ENCODE measurements at regions of chr10 and their contacts with region 1.

Region 1: DNA sequence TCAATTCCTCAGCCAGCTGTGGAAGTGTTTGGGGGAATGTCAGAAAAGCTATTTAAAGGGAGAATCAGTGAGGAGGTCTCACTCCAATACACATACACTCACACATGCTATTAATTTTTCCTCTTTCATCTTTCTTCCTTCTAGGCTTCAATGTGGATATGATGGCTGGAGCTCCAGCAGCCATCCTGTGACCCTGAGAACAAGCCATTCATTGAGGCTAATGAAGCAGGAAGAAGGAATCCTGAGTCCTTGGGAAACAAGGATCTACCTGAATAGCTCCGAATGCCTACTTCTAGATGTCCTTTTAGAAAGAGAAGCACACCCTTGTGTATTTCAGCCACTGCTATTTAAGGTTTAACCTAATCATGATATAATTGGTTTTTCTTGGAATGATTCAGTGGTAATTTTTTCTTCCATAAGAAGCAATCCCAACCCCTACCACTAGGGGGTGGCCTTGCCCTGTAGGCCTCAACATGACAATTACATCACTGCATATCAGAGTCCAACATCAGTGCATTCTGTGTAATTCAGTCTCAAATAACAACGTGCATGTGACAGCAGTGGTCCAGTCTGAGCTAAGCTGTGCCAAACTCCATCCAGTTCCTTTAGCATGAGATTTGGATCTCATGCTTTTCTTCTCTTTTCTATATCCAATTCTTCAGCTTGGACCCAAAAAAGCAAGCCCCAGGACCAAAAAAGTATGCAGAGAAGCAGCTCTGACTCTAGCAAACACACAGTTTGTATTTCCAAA is 85.3 kb upstream of the ANKRD1 start:
- DNase-seq: no peak
- H3K4me3 ChIP-seq: no peak overlapping the region
- H3K27me3 ChIP-seq: no peaks in the 10 kb centered on the region
- CTCF ChIP-seq: peak; percentile 93

Region 2: DNA sequence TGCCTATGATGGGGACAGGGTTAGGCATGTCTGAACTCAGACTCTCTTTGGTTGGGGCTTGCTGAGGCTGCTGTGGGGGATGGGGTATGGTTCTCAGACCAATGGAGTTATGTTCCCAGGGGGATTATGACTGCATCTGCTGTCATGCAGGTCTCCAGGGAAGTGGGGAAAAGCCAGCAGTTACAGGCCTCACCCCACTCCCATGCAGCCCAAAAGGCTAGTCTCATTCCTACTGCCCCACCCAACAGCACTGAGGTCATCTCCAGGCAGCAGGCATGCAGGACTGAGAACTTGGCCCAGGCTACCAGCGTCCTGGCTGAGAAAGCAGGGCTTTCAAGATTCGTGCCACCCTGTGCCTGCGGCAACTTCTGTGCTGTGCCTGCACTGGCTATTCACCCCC is 521.7 kb before region 1 on chr10:
- CTCF ChIA-PET with region 1: no interaction called
- POLR2A ChIA-PET with region 1: no interaction called
- DNase-seq: no peak
- H3K4me3 ChIP-seq: no peak overlapping the region
- H3K27me3 ChIP-seq: no peaks in the 10 kb centered on the region
- CTCF ChIP-seq: no peak

Region 3: GRCh38 chr10:90893190-90893589 is 113.0 kb before region 1 on chr10:
- CTCF ChIA-PET with region 1: no interaction called
- POLR2A ChIA-PET with region 1: no interaction called
- DNase-seq: no peak
- H3K4me3 ChIP-seq: no peak overlapping the region
- H3K27me3 ChIP-seq: no peaks in the 10 kb centered on the region
- CTCF ChIP-seq: no peak

Region 4: GRCh38 chr10:90920986-90921666 is 85.0 kb before region 1 on chr10 and contains the start of gene ANKRD1:
- CTCF ChIA-PET with region 1: interaction called, 11 read pairs
- POLR2A ChIA-PET with region 1: no interaction called
- DNase-seq: peak; percentile 63
- H3K4me3 ChIP-seq: no peak within 1 kb of the TSS
- H3K27me3 ChIP-seq: no peaks in the 10 kb centered on the region
- CTCF ChIP-seq: no peak
- polyA plus RNA-seq, gene ANKRD1: 2.2 and 3.2 TPM in 2 replicates

Region 5: GRCh38 chr10:90986136-90986760 is 19.9 kb before region 1 on chr10:
- CTCF ChIA-PET with region 1: interaction called, 10 read pairs
- POLR2A ChIA-PET with region 1: no interaction called
- DNase-seq: no peak
- H3K4me3 ChIP-seq: no peak overlapping the region
- H3K27me3 ChIP-seq: no peaks in the 10 kb centered on the region
- CTCF ChIP-seq: no peak

Region 6: DNA sequence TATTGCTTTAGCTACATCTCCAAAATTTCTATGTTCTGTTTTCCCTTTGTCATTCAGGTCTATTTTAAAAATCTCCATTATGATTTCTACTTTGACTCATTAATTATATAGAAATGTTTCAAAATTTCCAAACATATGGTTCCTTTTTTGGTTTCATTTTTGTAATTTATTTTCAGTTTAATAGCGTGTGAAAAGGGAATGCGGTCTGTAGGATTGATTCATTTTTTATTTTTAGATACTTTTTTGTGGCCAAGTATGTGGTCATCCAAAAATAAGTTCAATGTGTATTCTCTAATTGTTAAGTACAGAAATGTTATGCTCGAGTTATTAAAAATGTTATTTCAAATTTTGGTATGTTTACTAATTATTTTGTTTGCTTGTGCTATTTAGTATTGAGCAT is 12.8 kb before region 1 on chr10:
- CTCF ChIA-PET with region 1: interaction called, 12 read pairs
- POLR2A ChIA-PET with region 1: no interaction called
- DNase-seq: no peak
- H3K4me3 ChIP-seq: no peak overlapping the region
- H3K27me3 ChIP-seq: no peaks in the 10 kb centered on the region
- CTCF ChIP-seq: no peak

Region 7: GRCh38 chr10:91127341-91128082 is 121.3 kb after region 1 on chr10:
- CTCF ChIA-PET with region 1: no interaction called
- POLR2A ChIA-PET with region 1: no interaction called
- DNase-seq: no peak
- H3K4me3 ChIP-seq: no peak overlapping the region
- H3K27me3 ChIP-seq: peaks cover 7% of the 10 kb centered on the region
- CTCF ChIP-seq: no peak

Region 8: GRCh38 chr10:91251430-91252056 is 245.4 kb after region 1 on chr10:
- CTCF ChIA-PET with region 1: interaction called, 63 read pairs
- POLR2A ChIA-PET with region 1: interaction called, 9 read pairs
- DNase-seq: peak; percentile 1
- H3K4me3 ChIP-seq: no peak overlapping the region
- H3K27me3 ChIP-seq: no peaks in the 10 kb centered on the region
- CTCF ChIP-seq: peak; percentile 84

Region 9: GRCh38 chr10:91340613-91341362 is 334.6 kb after region 1 on chr10:
- CTCF ChIA-PET with region 1: no interaction called
- POLR2A ChIA-PET with region 1: no interaction called
- DNase-seq: peak; percentile 80
- H3K4me3 ChIP-seq: no peak overlapping the region
- H3K27me3 ChIP-seq: no peaks in the 10 kb centered on the region; the same call in 1 of the 2 replicates
- CTCF ChIP-seq: no peak

Measured in BJ (cell line).